CD8-positive, alpha-beta T cell (primary cell): ENCODE measurements at regions of chr1 and their contacts with region 1.

Region 1: DNA sequence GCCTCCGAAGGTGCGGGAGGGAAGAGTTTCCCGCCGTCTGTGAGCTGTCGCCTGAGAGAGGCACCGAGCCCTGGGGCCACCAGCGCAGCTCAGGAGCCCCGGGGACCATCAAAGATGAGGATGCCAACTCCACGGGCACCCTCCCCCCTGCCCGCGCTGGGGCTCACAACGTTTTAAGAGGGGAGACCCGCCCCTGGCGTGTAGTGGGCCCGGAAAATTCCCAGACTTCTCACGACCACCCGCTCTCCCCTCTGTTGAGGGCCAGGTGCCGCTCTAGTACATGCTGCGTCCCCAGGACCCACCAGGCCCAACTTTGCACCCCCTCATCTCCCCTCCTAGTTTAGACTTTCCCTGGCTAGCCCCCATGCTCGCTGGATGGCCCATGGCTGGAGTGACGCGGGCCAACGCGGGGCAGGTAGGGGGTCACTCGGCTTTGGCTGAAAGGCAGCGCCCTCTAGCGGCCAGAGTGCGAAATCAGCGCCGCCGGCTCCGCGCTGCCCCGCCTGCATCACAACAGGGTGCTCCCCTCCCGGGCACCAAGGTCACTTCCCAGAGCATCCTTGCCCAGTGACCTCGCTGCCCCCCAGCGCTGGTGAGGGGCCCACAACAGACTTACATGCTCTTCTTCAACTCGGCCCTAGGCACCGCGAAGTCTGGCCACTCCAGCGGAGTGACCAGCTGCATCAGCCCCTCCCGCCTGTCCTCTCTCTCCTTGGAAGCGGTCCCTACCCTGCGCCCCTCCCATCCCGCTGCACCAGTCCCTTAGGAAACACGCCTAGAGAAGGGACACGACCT is 1.8 kb downstream of the CD160 start:
- DNase-seq: peak; percentile 55 to 87 (median 73)
- ATAC-seq: peak; percentile 80
- H3K4me3 ChIP-seq: peak overlapping the region; percentile 38 to 69
- H3K4me3 Mint-ChIP-seq: peak overlapping the region; percentile 85
- H3K27ac ChIP-seq: peak overlapping the region in 1 of 2 experiments; percentile 58
- H3K27ac Mint-ChIP-seq: peak overlapping the region; percentile 64
- H3K4me1 ChIP-seq: peaks cover 19% of the 10 kb centered on the region
- H3K4me1 Mint-ChIP-seq: peaks cover 47% of the 10 kb centered on the region
- H3K27me3 ChIP-seq: peaks cover 0 to 3% of the 10 kb centered on the region in 2 experiments
- H3K27me3 Mint-ChIP-seq: peaks cover 14% of the 10 kb centered on the region
- CTCF ChIP-seq: peak; percentile 89

Region 2: GRCh38 chr1:145601593-145601992 is 119.5 kb before region 1 on chr1:
- CTCF ChIA-PET with region 1: interaction called, 4 read pairs
- POLR2A ChIA-PET with region 1: no interaction called
- intact Hi-C with region 1: loop called in 1 of 2 experiments (anchors 5 kb)
- DNase-seq: no peak
- ATAC-seq: no peak
- H3K4me3 ChIP-seq: no peak overlapping the region
- H3K4me3 Mint-ChIP-seq: no peak overlapping the region
- H3K27ac ChIP-seq: no peak overlapping the region
- H3K27ac Mint-ChIP-seq: no peak overlapping the region
- H3K4me1 ChIP-seq: no peaks in the 10 kb centered on the region
- H3K4me1 Mint-ChIP-seq: no peaks in the 10 kb centered on the region
- H3K27me3 ChIP-seq: no peaks in the 10 kb centered on the region
- H3K27me3 Mint-ChIP-seq: peaks cover 12% of the 10 kb centered on the region
- CTCF ChIP-seq: no peak

Region 3: GRCh38 chr1:145706086-145706680 is 14.9 kb before region 1 on chr1:
- CTCF ChIA-PET with region 1: interaction called, 25 read pairs
- POLR2A ChIA-PET with region 1: no interaction called
- intact Hi-C with region 1: no loop called
- DNase-seq: no peak
- ATAC-seq: no peak
- H3K4me3 ChIP-seq: no peak overlapping the region
- H3K4me3 Mint-ChIP-seq: no peak overlapping the region
- H3K27ac ChIP-seq: no peak overlapping the region
- H3K27ac Mint-ChIP-seq: no peak overlapping the region
- H3K4me1 ChIP-seq: no peaks in the 10 kb centered on the region
- H3K4me1 Mint-ChIP-seq: no peaks in the 10 kb centered on the region
- H3K27me3 ChIP-seq: no peaks in the 10 kb centered on the region
- H3K27me3 Mint-ChIP-seq: no peaks in the 10 kb centered on the region
- CTCF ChIP-seq: no peak

Region 4: DNA sequence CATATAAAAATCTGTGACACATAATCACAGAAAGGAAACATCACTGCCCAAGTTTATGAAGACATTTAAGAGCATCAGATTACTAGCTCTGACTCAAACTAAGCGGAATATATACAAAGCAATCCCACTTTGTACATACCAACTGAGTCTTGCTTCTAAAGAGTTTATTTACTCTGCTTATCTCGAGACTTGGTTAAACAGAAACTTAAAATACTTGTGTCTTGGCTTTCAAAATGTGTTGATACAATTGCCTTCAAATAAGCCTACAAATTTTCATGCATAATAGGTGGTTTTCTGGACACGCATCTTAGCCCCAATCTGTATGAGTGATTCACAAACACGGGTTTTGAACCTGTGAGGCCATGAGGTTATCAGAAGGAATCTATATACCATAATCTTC is 19.2 kb after region 1 on chr1:
- CTCF ChIA-PET with region 1: interaction called, 18 read pairs
- POLR2A ChIA-PET with region 1: no interaction called
- intact Hi-C with region 1: no loop called
- DNase-seq: no peak
- ATAC-seq: no peak
- H3K4me3 ChIP-seq: no peak overlapping the region
- H3K4me3 Mint-ChIP-seq: no peak overlapping the region
- H3K27ac ChIP-seq: no peak overlapping the region
- H3K27ac Mint-ChIP-seq: no peak overlapping the region
- H3K4me1 ChIP-seq: no peaks in the 10 kb centered on the region
- H3K4me1 Mint-ChIP-seq: no peaks in the 10 kb centered on the region
- H3K27me3 ChIP-seq: no peaks in the 10 kb centered on the region
- H3K27me3 Mint-ChIP-seq: no peaks in the 10 kb centered on the region
- CTCF ChIP-seq: no peak

Region 5: GRCh38 chr1:145782166-145783099 is 61.4 kb after region 1 on chr1:
- CTCF ChIA-PET with region 1: no interaction called
- POLR2A ChIA-PET with region 1: no interaction called
- intact Hi-C with region 1: loop called in 1 of 2 experiments (anchors 10 kb)
- DNase-seq: no peak
- ATAC-seq: no peak
- H3K4me3 ChIP-seq: no peak overlapping the region
- H3K4me3 Mint-ChIP-seq: no peak overlapping the region
- H3K27ac ChIP-seq: no peak overlapping the region
- H3K27ac Mint-ChIP-seq: no peak overlapping the region
- H3K4me1 ChIP-seq: peaks cover 17% of the 10 kb centered on the region
- H3K4me1 Mint-ChIP-seq: peaks cover 21% of the 10 kb centered on the region
- H3K27me3 ChIP-seq: no peaks in the 10 kb centered on the region
- H3K27me3 Mint-ChIP-seq: no peaks in the 10 kb centered on the region
- CTCF ChIP-seq: no peak

Region 6: DNA sequence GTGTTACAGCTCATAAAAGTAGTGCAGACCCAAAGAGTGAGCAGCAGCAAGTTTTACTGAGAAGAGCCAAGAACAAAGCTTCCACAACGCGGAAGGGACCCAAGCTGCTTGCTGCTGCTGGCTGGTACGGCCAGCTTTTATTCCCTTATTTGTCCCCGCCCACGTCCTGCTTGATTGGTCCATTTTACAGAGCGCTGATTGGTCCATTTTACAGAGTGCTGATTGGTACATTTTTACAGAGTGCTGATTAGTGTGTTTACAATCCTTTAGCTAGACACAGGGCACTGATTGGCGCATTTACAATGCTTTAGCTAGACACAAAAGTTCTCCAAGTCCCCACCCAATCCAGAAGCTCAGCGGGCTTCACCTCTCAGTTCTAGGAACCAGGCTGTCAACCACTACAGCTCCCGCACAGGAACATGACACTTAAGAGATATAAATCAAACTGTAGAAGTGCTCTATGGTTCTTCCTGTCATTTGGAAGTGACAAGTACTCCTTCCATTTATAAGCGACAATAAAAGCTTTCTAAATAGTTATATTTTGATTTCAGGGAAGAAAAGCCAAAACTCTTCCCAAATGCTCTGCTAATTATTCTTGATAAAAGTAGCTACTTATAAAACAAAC is 74.3 kb after region 1 on chr1:
- CTCF ChIA-PET with region 1: no interaction called
- POLR2A ChIA-PET with region 1: no interaction called
- intact Hi-C with region 1: no loop called
- DNase-seq: no peak
- ATAC-seq: no peak
- H3K4me3 ChIP-seq: no peak overlapping the region
- H3K4me3 Mint-ChIP-seq: no peak overlapping the region
- H3K27ac ChIP-seq: no peak overlapping the region
- H3K27ac Mint-ChIP-seq: no peak overlapping the region
- H3K4me1 ChIP-seq: no peaks in the 10 kb centered on the region
- H3K4me1 Mint-ChIP-seq: peaks cover 12% of the 10 kb centered on the region
- H3K27me3 ChIP-seq: no peaks in the 10 kb centered on the region
- H3K27me3 Mint-ChIP-seq: no peaks in the 10 kb centered on the region
- CTCF ChIP-seq: no peak

Region 7: GRCh38 chr1:145871994-145872924 is 151.2 kb after region 1 on chr1:
- CTCF ChIA-PET with region 1: no interaction called
- POLR2A ChIA-PET with region 1: no interaction called
- intact Hi-C with region 1: no loop called
- DNase-seq: peak in 8 of 9 experiments; percentile 12 to 75 (median 42)
- ATAC-seq: peak; percentile 76
- H3K4me3 ChIP-seq: peak overlapping the region; percentile 49 to 59
- H3K4me3 Mint-ChIP-seq: peak overlapping the region; percentile 81
- H3K27ac ChIP-seq: peak overlapping the region; percentile 1 to 38
- H3K27ac Mint-ChIP-seq: peak overlapping the region; percentile 69
- H3K4me1 ChIP-seq: peaks cover 13% of the 10 kb centered on the region
- H3K4me1 Mint-ChIP-seq: peaks cover 15% of the 10 kb centered on the region
- H3K27me3 ChIP-seq: no peaks in the 10 kb centered on the region
- H3K27me3 Mint-ChIP-seq: peaks cover 2% of the 10 kb centered on the region
- CTCF ChIP-seq: no peak

Region 8: GRCh38 chr1:146012737-146013403 is 291.8 kb after region 1 on chr1:
- CTCF ChIA-PET with region 1: no interaction called
- POLR2A ChIA-PET with region 1: no interaction called
- intact Hi-C with region 1: loop called in 1 of 2 experiments (anchors 10 kb)
- DNase-seq: peak; percentile 31 to 86 (median 61)
- ATAC-seq: peak; percentile 87
- H3K4me3 ChIP-seq: no peak overlapping the region
- H3K4me3 Mint-ChIP-seq: no peak overlapping the region
- H3K27ac ChIP-seq: no peak overlapping the region
- H3K27ac Mint-ChIP-seq: no peak overlapping the region
- H3K4me1 ChIP-seq: peaks cover 1% of the 10 kb centered on the region
- H3K4me1 Mint-ChIP-seq: peaks cover 4% of the 10 kb centered on the region
- H3K27me3 ChIP-seq: no peaks in the 10 kb centered on the region
- H3K27me3 Mint-ChIP-seq: peaks cover 3% of the 10 kb centered on the region
- CTCF ChIP-seq: peak; percentile 97